ENCODE measurements at regions of chr2 and their contacts with region 1.

Region 1: DNA sequence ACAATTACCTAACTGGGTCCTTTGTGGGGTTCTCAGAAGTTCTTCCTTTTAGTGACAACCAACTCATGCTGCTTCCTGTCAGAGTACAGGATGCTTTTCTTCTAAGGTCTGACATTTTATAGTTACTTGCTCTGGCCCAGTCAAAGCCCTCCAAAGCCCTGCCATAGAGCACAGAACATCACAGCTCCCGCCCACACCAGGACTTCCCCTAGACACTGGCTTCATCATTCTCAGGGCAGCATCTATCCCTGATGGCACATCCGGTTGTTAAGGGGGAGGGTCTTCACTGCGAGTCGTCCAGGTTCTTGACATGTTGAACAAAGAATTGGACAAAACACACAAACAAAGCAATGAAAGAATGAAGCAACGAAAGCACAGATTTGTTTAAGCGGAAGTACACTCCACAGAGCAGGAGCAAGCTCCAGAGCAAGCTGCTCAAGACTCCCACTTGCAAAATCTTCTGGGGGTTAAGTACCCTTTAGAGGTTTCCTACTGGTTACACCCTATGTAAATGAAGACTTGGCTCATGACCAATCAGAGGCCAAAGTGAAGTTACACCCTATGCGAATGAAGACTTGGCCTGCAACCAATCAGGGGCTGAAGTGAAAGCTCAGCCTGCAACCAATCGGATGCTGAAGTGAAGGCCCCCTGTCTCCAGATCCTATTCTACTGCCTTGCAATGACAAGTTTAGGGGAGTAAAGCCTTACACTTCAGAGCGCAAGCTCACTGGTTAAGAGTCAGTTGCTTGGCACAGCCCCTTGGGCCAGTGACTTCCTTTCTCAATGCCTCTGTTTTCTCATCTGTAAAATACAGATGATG is 79.0 kb downstream of the HDAC4 start:
- DNase-seq: peak; percentile 87
- ATAC-seq: peak; percentile 94
- H3K4me3 Mint-ChIP-seq: peak overlapping the region; percentile 39
- H3K27ac Mint-ChIP-seq: peak overlapping the region; percentile 91
- H3K4me1 Mint-ChIP-seq: peaks cover 80% of the 10 kb centered on the region
- H3K27me3 Mint-ChIP-seq: peaks cover 5% of the 10 kb centered on the region

Region 2: GRCh38 chr2:239245872-239246701 is 75.7 kb before region 1 on chr2:
- CTCF ChIA-PET with region 1: no interaction called
- POLR2A ChIA-PET with region 1: no interaction called
- intact Hi-C with region 1: no loop called
- DNase-seq: no peak
- ATAC-seq: no peak
- H3K4me3 Mint-ChIP-seq: no peak overlapping the region
- H3K27ac Mint-ChIP-seq: no peak overlapping the region
- H3K4me1 Mint-ChIP-seq: peaks cover 40% of the 10 kb centered on the region
- H3K27me3 Mint-ChIP-seq: no peaks in the 10 kb centered on the region

Region 3: GRCh38 chr2:239298116-239298804 is 23.5 kb before region 1 on chr2:
- CTCF ChIA-PET with region 1: interaction called, 5 read pairs
- POLR2A ChIA-PET with region 1: interaction called, 5 read pairs
- intact Hi-C with region 1: loop called in 1 of 2 experiments (anchors 1 kb)
- DNase-seq: peak; percentile 86
- ATAC-seq: peak; percentile 91
- H3K4me3 Mint-ChIP-seq: peak overlapping the region; percentile 63
- H3K27ac Mint-ChIP-seq: peak overlapping the region; percentile 75
- H3K4me1 Mint-ChIP-seq: peaks cover 71% of the 10 kb centered on the region
- H3K27me3 Mint-ChIP-seq: peaks cover 8% of the 10 kb centered on the region

Region 4: GRCh38 chr2:239369631-239370161 is 47.9 kb after region 1 on chr2:
- CTCF ChIA-PET with region 1: interaction called, 3 read pairs
- POLR2A ChIA-PET with region 1: interaction called, 4 read pairs
- intact Hi-C with region 1: loop called (anchors 1 to 2 kb)
- DNase-seq: peak; percentile 91
- ATAC-seq: peak; percentile 97
- H3K4me3 Mint-ChIP-seq: peak overlapping the region; percentile 70
- H3K27ac Mint-ChIP-seq: peak overlapping the region; percentile 90
- H3K4me1 Mint-ChIP-seq: peaks cover 8% of the 10 kb centered on the region
- H3K27me3 Mint-ChIP-seq: no peaks in the 10 kb centered on the region